Tibial artery (tissue), 4 donors: ENCODE measurements at regions of chr14 and their contacts with region 1.

Region 1: DNA sequence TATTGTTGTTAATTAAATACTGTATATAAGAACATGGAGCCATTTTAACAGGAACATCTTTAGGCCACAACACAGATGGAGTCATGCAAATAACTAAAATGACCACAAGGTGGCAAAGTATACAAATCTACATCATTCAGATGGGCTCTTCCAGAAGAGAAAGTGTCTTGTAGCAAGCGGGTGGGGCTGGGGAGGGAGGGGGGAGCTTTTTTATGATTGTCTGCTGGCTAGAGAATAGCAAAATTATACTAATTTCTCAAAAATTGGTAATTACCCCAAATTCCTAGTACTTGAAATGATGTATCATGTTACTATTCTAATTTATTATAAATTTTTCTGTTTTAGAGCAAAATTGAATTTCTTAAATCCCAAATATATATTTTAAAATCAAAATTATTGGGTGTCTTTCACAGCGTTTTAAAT is 378.7 kb downstream of the PRKD1 start:
- DNase-seq: no peak
- H3K4me3 ChIP-seq: no peak overlapping the region
- H3K27ac ChIP-seq: no peak overlapping the region
- H3K4me1 ChIP-seq: no peaks in the 10 kb centered on the region
- H3K27me3 ChIP-seq: no peaks in the 10 kb centered on the region
- CTCF ChIP-seq: peak; percentile 61 to 62

Region 2: GRCh38 chr14:29403091-29403490 is 145.9 kb before region 1 on chr14:
- intact Hi-C with region 1: no loop called
- DNase-seq: no peak
- H3K4me3 ChIP-seq: no peak overlapping the region
- H3K27ac ChIP-seq: no peak overlapping the region
- H3K4me1 ChIP-seq: no peaks in the 10 kb centered on the region
- H3K27me3 ChIP-seq: no peaks in the 10 kb centered on the region
- CTCF ChIP-seq: no peak

Region 3: DNA sequence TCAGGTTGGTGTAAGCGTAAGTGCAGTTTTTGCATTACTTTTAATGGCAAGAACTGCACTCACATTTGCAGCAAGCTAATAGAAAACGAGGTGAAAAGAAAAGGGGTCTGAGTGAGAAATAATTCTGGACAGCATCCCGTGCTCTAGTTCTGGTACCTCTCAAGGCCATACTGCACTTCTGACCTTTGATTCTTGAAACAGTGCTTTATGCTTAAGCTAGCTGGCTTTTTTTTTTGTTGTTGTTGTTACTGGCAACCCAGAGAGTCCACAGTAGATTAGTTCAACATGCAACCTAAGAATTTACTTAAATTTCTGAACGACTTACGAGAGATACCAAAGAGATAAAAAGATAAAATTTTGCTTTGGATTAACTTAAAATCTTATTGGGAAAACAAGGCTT is 453.9 kb after region 1 on chr14:
- intact Hi-C with region 1: loop called (anchors 2 kb)
- DNase-seq: no peak
- H3K4me3 ChIP-seq: no peak overlapping the region
- H3K27ac ChIP-seq: no peak overlapping the region
- H3K4me1 ChIP-seq: no peaks in the 10 kb centered on the region
- H3K27me3 ChIP-seq: no peaks in the 10 kb centered on the region
- CTCF ChIP-seq: no peak

Region 4: GRCh38 chr14:30214461-30215090 is 665.6 kb after region 1 on chr14:
- intact Hi-C with region 1: loop called (anchors 5 kb)
- DNase-seq: no peak
- H3K4me3 ChIP-seq: no peak overlapping the region
- H3K27ac ChIP-seq: no peak overlapping the region
- H3K4me1 ChIP-seq: peaks cover 0 to 8% (median 0%) of the 10 kb centered on the region in 4 donors
- H3K27me3 ChIP-seq: no peaks in the 10 kb centered on the region
- CTCF ChIP-seq: peak; percentile 70 to 72

Region 5: GRCh38 chr14:30227876-30228275 is 678.9 kb after region 1 on chr14:
- intact Hi-C with region 1: no loop called
- DNase-seq: peak; percentile 43 to 66
- H3K4me3 ChIP-seq: no peak overlapping the region
- H3K27ac ChIP-seq: peak overlapping the region; percentile 49 to 56
- H3K4me1 ChIP-seq: peaks cover 0 to 46% (median 33%) of the 10 kb centered on the region in 4 donors
- H3K27me3 ChIP-seq: no peaks in the 10 kb centered on the region
- CTCF ChIP-seq: no peak

Region 6: DNA sequence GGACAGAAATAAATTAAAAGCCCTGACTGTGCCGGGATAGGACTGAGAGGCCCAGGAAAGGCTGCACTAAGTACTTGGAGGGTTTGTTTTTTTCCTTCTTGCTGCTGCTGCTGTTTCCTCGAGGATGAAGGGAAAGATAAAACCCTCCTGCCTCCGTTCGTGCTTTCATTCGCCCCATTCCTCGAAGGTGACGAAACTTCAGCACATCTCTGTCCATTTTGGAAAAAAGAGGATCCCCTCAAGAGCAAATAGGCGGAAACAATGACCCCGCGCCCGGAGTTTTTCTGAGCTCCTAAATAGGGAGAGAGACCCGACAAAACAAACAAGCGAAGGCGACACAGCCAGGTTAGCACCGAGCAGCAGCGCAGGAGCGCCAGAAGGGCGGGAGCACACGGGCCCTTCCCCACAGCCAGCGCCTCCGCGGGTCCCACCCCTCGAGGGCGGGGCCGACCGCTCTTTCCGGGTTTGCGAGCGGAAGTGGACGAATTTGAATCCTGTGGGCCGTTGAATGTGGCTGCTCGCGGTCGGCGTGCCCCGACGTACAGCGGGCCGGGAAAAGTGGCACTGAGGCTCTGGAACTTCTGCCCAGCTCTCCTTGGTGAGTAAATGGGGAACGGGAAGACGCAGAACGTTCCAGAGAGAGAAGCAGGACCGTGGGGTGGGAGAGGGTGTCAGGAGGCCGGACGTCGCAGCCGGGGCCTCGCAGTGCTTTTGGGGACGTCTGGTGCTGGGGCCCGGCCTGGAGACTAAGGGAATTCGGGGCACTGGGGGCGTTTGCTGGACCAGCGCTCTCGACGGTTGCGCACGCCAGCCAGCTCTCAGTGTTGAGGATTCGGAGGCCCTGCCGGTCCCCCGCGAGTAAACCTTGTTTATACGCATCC is 1010.0 kb after region 1 on chr14 and contains the start of gene G2E3:
- intact Hi-C with region 1: no loop called
- DNase-seq: peak; percentile 83 to 91
- H3K4me3 ChIP-seq: peak within 1 kb of the TSS; percentile 77 to 94
- H3K27ac ChIP-seq: peak within 1 kb of the TSS; percentile 69 to 76
- H3K4me1 ChIP-seq: peaks cover 0 to 23% (median 12%) of the 10 kb centered on the region in 4 donors
- H3K27me3 ChIP-seq: no peaks in the 10 kb centered on the region
- CTCF ChIP-seq: no peak